Transverse colon (tissue), 4 donors: ENCODE measurements at regions of chr10 and their contacts with region 1.

Region 1: GRCh38 chr10:110497438-110498086 is at the start of gene DUSP5:
- DNase-seq: peak; percentile 96
- H3K4me3 ChIP-seq: peak within 1 kb of the TSS; percentile 58 to 70 (median 64)
- H3K27ac ChIP-seq: peak within 1 kb of the TSS; percentile 88 to 94 (median 91)
- H3K4me1 ChIP-seq: peaks cover 27 to 55% (median 49%) of the 10 kb centered on the region in 4 donors
- H3K27me3 ChIP-seq: peaks cover 30% of the 10 kb centered on the region
- CTCF ChIP-seq: no peak
- EP300 ChIP-seq: no peak
- POLR2A ChIP-seq: peak; percentile 90
- total RNA-seq, gene DUSP5: 6.2 to 16.0 (median 6.6) TPM

Region 2: GRCh38 chr10:110354322-110354766 is 143.2 kb before region 1 on chr10:
- in situ Hi-C with region 1: loop called in 1 of 4 experiments (anchors 10 kb)
- intact Hi-C with region 1: no loop called
- DNase-seq: peak; percentile 91
- H3K4me3 ChIP-seq: no peak overlapping the region
- H3K27ac ChIP-seq: peak overlapping the region in 3 of 4 donors; percentile 13 to 55 (median 42)
- H3K4me1 ChIP-seq: peaks cover 3 to 17% (median 12%) of the 10 kb centered on the region in 4 donors
- H3K27me3 ChIP-seq: peaks cover 3% of the 10 kb centered on the region
- CTCF ChIP-seq: peak; percentile 62 to 88 (median 79)
- EP300 ChIP-seq: no peak
- POLR2A ChIP-seq: no peak

Region 3: DNA sequence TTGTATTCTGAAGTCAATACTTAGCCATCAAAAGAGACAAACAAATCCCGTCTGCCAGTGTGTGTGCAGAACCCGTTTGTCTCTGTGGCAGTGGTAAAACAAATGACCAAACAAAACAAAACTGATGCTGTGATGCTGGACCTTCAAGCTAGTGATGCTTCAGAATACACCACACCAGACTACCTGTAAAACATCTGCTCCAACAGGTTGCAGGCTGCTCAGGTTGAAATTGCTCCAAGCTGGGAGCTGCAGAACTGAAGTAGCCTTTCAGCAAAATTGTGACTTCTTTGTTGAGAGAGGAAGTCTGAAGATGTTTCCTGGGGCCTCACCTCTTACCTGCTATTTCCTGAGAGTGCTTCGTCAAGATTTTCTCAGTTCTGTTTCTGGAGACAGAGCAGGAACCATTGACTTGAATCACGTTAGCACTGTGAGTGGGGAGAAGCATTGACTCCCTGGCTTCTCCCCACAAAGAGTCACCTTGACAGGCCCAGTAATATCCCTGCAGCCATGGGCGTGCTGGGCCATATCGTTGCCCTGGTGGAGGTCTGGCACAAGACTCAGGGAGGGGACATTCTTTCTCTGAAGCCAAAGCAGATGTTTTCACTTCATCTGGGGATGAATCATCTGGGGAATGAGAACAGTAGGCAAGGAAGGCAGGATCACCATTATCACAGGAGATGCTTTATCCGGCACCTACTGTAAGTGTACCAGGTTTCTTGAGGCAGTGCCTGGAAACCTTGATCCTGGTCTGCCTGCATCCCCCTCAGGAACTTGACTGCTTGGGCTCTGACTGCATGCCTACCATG is 226.8 kb after region 1 on chr10:
- in situ Hi-C with region 1: no loop called
- intact Hi-C with region 1: no loop called
- DNase-seq: no peak
- H3K4me3 ChIP-seq: no peak overlapping the region
- H3K27ac ChIP-seq: no peak overlapping the region
- H3K4me1 ChIP-seq: peaks cover 0 to 5% (median 0%) of the 10 kb centered on the region in 4 donors
- H3K27me3 ChIP-seq: no peaks in the 10 kb centered on the region
- CTCF ChIP-seq: no peak
- EP300 ChIP-seq: no peak
- POLR2A ChIP-seq: no peak